Aorta (tissue), 5 donors: ENCODE measurements at regions of chr7 and their contacts with region 1.

Region 1: DNA sequence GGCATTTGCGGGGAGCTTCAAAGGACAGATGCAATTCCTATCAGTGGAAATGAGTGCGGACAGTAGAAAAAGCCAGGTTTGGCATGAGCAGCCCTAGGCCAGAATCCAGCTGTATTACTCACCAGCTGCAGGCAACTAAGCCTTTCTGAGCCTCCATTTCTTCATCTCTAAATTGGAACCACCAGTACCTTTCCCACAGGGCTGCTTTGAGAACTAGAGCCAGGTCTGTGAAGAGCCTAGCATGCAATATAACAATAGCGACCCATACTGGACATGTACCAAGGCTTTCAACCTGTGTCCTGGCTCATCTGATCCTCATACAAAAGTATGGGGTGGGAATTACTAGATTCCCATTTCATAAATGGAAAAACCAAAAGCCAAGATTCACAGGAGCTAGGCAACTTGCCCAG is 101.0 kb downstream of the GSAP start:
- DNase-seq: peak in 1 of 2 donors; percentile 61
- ATAC-seq: peak; percentile 74
- H3K4me3 ChIP-seq: no peak overlapping the region
- H3K27ac ChIP-seq: no peak overlapping the region
- H3K4me1 ChIP-seq: peaks cover 0 to 27% of the 10 kb centered on the region in 2 donors
- H3K27me3 ChIP-seq: no peaks in the 10 kb centered on the region

Region 2: DNA sequence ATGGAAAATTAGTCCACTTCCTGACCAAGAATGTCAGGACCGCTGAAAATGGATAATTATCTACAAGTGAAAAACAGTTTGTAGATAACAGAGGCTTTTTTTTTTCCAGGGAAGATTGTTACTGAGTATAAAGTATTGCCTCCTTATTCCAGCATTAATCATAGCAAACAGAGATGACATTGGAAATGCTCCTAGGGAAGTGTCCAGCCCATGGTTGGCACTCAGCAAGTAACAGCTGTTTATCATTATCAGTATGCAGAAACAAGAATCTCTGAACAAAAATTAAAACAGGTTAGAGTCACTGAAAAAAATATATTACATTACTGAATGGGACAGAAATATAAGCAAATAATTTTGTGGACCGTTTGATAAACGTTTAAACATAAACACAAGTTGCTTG is 130.2 kb before region 1 on chr7:
- intact Hi-C with region 1: loop called in 1 of 2 experiments (anchors 5 kb)
- DNase-seq: no peak
- ATAC-seq: peak; percentile 69
- H3K4me3 ChIP-seq: no peak overlapping the region
- H3K27ac ChIP-seq: peak overlapping the region in 1 of 2 donors; percentile 28
- H3K4me1 ChIP-seq: peaks cover 0 to 3% of the 10 kb centered on the region in 2 donors
- H3K27me3 ChIP-seq: no peaks in the 10 kb centered on the region

Region 3: GRCh38 chr7:77368974-77369373 is 53.8 kb after region 1 on chr7:
- intact Hi-C with region 1: no loop called
- DNase-seq: no peak
- ATAC-seq: no peak
- H3K4me3 ChIP-seq: no peak overlapping the region
- H3K27ac ChIP-seq: no peak overlapping the region
- H3K4me1 ChIP-seq: no peaks in the 10 kb centered on the region
- H3K27me3 ChIP-seq: no peaks in the 10 kb centered on the region

Region 4: DNA sequence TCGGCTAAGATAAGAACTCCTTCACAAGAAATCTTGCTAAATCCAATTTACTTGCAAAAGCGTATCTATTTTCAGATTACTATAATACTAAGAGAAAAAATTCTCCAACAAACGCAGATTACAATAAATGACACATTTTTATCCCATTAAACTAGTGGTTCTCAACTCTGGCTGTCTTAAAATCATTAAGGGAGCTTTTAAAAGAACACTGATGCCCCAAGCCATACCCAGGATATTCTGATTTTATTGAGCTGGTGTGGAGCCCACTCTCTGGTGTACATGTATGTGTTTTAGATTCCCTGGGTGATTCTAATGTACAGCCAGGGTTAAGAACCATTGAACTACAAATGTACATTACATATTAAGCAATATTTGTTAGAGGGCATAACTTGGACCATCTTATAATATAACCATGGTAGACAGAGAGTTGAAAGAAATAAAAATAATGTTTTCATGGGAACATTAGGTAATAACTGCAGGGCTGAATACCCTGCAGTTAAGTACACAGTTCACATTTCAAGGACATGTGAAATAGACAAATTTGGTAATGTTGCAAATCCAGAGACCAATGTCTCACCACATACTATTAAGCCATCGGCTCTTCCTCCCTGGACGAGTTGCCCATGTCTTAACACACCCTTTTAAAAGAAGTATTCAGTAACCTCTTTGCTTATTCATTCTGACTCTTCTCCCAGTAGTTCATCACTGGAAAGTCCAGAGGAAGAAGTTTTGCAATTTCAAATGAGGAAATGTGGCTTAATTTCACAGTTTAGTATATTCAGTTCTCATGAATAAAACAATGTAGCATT is 94.8 kb after region 1 on chr7:
- intact Hi-C with region 1: no loop called
- DNase-seq: no peak
- ATAC-seq: no peak
- H3K4me3 ChIP-seq: no peak overlapping the region
- H3K27ac ChIP-seq: no peak overlapping the region
- H3K4me1 ChIP-seq: no peaks in the 10 kb centered on the region
- H3K27me3 ChIP-seq: no peaks in the 10 kb centered on the region

Region 5: DNA sequence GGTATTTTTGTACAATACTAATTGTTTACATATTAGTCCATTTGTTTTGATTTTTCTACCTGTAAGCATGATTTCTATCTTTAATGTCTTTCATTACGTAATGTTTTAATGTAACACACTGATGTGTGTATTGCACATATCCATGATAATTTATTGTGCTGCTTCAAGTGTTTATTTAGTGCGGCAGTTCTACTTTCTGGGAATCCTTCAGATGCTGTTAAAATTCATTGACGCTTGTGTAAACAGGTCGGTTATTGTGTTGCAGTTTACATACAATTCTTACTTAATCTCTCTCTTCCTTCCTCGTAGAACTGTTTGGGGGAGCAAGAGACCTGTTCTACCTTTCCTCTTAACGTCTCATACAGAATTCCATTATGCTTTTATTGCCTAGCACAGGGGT is 476.1 kb after region 1 on chr7:
- intact Hi-C with region 1: no loop called
- DNase-seq: no peak
- ATAC-seq: no peak
- H3K4me3 ChIP-seq: no peak overlapping the region
- H3K27ac ChIP-seq: no peak overlapping the region
- H3K4me1 ChIP-seq: no peaks in the 10 kb centered on the region
- H3K27me3 ChIP-seq: no peaks in the 10 kb centered on the region